Activated B cell treated with CpG ODN at 0.5 μM for 24 hours (primary cell): ENCODE measurements at regions of chr3 and their contacts with region 1.

Region 1: GRCh38 chr3:115019900-115020299 is 127.2 kb downstream of the ZBTB20 start:
- DNase-seq: no peak
- ATAC-seq: no peak
- H3K4me3 Mint-ChIP-seq: no peak overlapping the region
- H3K27ac Mint-ChIP-seq: no peak overlapping the region
- H3K4me1 Mint-ChIP-seq: peaks cover 21% of the 10 kb centered on the region
- H3K27me3 Mint-ChIP-seq: no peaks in the 10 kb centered on the region
- CTCF ChIP-seq: no peak

Region 2: DNA sequence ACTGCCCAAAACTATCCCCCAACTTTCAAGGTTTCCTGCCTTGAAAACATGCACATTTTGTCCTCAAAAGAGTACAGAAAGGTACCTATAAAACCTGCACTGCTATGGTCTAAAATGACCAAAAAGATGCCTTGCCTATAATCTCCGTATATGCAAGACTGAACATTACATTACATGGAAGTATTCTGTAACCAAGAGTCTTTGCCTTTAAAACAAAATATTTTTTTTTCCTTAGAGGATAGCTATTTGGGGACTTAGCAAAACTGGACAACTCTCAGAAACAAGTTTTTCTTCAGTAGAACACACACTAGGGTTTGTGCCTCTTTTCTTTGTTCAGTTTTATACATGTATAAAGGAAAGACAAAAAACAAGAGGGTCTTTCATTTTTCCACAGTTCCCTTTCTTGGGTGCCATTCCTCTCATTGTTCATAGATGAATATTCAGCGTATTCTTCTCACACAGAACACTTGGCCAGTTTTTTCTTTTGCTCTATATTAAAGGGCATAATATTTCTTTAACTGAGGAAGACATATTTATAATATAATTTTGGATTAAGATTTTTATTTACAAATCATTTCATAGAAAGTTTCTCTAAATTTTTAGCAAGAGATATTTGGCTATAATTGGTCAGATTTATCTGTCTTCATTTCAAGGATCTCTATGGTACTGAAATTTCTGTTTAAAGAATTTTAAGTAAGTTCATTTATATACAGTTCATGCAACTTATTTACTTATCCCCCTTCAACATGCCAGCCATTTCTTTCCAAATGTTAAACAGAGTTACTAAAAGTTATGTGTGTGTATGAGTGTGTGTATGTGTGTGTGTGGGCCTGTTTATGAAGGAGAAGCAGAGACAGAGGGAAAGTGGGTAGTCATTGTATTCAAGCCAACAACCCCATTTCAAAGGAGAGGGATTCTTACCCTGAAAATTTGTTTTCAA is 15.4 kb before region 1 on chr3:
- CTCF ChIA-PET with region 1: no interaction called
- POLR2A ChIA-PET with region 1: interaction called, 3 read pairs
- intact Hi-C with region 1: loop called (anchors 2 kb)
- DNase-seq: no peak
- ATAC-seq: no peak
- H3K4me3 Mint-ChIP-seq: no peak overlapping the region
- H3K27ac Mint-ChIP-seq: no peak overlapping the region
- H3K4me1 Mint-ChIP-seq: no peaks in the 10 kb centered on the region
- H3K27me3 Mint-ChIP-seq: no peaks in the 10 kb centered on the region
- CTCF ChIP-seq: no peak

Region 3: DNA sequence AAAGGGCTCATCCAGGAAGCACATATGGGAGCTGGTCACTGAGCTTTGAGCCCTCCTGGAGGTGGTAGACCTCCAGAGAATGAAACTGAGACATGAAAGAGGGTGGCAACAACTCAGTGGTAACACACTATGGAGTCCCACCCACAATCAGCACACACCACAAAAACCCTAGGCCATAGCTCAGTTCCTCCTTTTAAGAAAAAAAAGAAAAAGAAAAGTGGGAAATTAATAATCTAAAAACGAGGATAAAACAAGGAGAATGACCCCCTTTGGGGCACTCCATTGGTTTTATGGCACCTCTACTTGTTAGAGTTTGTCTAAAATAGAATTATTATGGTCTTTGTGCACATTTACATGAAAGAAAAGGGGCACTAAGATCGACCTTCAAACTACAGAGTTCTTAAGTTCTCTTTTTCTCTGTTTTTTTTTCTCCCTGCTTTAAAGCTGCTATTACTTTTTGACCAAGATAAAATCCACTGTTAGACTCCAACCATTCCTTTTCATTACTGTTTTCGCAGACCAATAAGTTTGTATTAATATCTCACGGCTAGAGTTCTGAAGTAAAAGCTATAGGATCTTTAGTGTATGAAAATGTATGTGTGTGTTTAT is 167.4 kb after region 1 on chr3:
- CTCF ChIA-PET with region 1: no interaction called
- POLR2A ChIA-PET with region 1: no interaction called
- intact Hi-C with region 1: no loop called
- DNase-seq: no peak
- ATAC-seq: peak; percentile 99
- H3K4me3 Mint-ChIP-seq: peak overlapping the region; percentile 76
- H3K27ac Mint-ChIP-seq: peak overlapping the region; percentile 95
- H3K4me1 Mint-ChIP-seq: peaks cover 26% of the 10 kb centered on the region
- H3K27me3 Mint-ChIP-seq: no peaks in the 10 kb centered on the region
- CTCF ChIP-seq: no peak